ENCODE measurements at regions of chr10 and their contacts with region 1.

Region 1: DNA sequence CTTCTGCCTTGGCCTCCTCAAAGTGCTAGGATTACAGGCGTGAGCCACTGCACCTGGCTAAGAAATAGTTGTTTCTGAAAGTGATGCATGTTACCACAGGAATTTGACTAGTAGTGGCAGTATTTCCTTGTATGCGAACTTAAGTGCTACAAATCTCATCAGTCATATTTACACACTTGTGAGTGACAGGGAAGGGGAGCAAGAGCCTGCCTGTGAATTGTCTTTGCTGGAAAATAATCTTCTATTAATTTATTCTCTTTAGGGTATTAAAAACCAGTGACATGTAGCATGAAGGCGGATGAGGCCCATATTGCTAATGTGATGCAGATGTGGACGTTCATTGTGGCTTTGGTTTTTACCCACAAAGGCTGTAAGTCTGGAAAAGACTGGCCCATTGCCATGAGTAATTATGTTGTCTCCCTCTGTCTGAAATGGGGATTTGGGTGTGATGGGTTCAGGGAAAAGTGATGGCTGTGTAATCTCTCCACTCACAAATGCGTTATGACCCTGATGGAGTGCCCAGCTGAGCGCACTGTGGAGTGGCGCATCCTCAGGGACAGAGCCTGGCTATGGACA is 97.6 kb downstream of the CCNY start:
- DNase-seq: peak; percentile 36
- H3K4me3 Mint-ChIP-seq: no peak overlapping the region
- H3K27ac Mint-ChIP-seq: no peak overlapping the region
- H3K4me1 Mint-ChIP-seq: peaks cover 24% of the 10 kb centered on the region
- H3K27me3 Mint-ChIP-seq: no peaks in the 10 kb centered on the region
- CTCF ChIP-seq: no peak

Region 2: DNA sequence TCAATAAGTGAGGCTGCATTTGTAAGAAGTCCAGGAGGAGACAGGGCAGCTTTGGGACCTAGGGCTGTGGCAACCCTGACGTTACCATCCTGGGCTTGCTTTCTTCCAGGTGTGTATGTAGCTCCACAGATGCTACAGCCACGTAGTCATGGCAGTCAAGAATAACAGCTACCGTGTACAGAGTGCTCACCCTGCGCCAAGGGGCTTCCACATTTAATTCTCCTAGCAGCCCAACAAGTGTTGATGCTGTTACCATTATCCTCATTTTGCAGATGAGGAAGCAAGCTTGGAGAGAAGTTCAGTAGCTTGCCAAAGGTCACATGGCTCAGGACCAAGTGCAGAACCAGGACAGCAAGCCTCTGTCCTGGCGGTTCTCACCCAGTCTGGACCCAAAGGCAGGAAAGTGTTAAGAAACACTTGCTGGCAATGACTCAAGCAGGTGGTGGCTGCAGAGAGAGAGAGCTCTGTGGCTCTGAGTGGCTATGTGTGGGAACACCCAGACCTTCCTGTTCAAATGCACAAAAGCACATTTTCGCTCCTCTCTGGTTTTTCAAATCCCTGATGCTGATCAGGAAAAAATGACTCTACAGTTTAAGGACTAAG is 217.5 kb before region 1 on chr10:
- CTCF ChIA-PET with region 1: no interaction called
- intact Hi-C with region 1: no loop called
- DNase-seq: no peak
- H3K4me3 Mint-ChIP-seq: no peak overlapping the region
- H3K27ac Mint-ChIP-seq: no peak overlapping the region
- H3K4me1 Mint-ChIP-seq: no peaks in the 10 kb centered on the region
- H3K27me3 Mint-ChIP-seq: no peaks in the 10 kb centered on the region
- CTCF ChIP-seq: no peak

Region 3: DNA sequence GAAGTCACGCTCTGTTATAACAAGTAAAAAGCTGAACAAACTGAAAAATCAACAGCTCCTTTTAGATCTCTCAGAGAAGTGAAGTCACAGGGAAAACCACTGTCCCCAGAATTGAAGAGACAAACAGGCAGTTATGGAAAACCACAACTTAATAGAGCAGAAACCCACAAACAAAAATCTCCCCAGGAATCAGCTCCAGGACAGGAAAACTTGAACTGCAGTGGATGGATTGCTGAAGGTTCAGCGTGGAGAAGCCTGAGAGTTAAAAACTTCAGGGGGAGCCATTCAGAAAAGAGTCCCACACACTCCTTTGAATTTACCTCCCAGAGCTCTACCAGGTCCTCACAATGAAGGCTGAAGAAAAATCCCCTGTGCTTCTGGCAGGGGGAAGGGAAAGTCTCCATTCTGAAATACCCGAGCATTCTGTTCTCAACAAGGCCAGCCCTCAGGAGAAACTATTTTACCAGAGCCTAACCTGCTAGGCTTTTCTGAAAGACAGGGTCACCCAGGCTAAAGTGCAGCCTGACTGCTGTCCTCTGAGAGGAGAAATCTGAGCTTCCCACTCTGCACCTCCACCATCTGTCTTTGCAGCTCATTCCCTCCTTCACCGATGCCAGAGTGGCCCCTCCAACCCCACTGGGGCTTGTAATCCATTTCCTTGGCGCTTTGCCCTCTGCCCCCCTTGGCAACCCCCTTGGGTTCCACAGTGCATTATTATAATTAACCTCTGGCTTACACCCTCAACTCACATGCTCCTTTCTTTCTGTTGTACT is 162.7 kb before region 1 on chr10:
- CTCF ChIA-PET with region 1: no interaction called
- intact Hi-C with region 1: no loop called
- DNase-seq: no peak
- H3K4me3 Mint-ChIP-seq: no peak overlapping the region
- H3K27ac Mint-ChIP-seq: no peak overlapping the region
- H3K4me1 Mint-ChIP-seq: peaks cover 9% of the 10 kb centered on the region
- H3K27me3 Mint-ChIP-seq: no peaks in the 10 kb centered on the region
- CTCF ChIP-seq: no peak

Region 4: DNA sequence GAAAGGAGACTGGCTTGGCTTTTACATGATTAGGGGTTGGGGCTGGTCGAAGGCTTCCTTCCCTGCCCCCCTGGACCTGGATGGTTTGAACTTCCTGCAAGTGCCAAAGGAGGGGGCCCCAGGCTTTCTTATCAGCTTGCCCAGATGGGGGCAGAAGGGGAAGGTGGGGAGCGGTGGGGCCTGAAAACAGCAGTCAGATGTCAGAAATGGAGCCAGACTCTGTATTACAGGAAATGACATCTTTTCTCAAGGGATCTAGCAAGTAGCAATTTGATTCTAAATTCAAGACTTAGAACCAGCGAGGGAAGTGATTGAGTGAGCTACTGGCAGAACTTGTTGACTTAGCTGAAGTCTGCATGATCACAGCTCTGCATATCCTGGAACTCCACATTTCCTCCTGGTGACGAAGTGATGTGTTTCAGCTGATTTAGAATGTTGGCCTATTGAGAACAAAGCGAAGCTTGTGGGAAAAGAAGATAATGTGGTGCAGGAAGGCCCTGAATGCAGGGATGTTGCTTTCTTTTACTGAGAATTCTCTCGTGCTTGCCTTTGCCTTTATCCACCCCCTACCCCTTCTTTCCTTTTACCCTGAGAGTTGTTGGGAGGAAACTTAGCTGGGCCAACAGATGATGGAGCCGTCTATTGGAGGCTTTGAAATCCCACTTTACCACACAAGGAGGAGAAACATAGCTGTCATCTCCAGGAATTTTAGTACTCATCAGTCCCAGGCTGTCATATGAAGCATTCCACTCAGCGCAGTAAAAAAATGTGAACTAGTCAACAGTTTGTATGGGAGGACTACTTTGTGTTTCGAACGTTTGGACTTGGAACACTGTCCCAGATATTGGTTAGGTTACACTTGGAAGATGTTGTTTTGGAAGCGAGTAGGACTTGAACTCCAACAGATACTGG is 54.5 kb before region 1 on chr10:
- CTCF ChIA-PET with region 1: no interaction called
- intact Hi-C with region 1: loop called (anchors 5 kb)
- DNase-seq: peak; percentile 10
- H3K4me3 Mint-ChIP-seq: no peak overlapping the region
- H3K27ac Mint-ChIP-seq: no peak overlapping the region
- H3K4me1 Mint-ChIP-seq: peaks cover 32% of the 10 kb centered on the region
- H3K27me3 Mint-ChIP-seq: no peaks in the 10 kb centered on the region
- CTCF ChIP-seq: no peak

Region 5: GRCh38 chr10:35398355-35398754 is 35.6 kb before region 1 on chr10:
- CTCF ChIA-PET with region 1: no interaction called
- intact Hi-C with region 1: no loop called
- DNase-seq: no peak
- H3K4me3 Mint-ChIP-seq: no peak overlapping the region
- H3K27ac Mint-ChIP-seq: no peak overlapping the region
- H3K4me1 Mint-ChIP-seq: peaks cover 10% of the 10 kb centered on the region
- H3K27me3 Mint-ChIP-seq: no peaks in the 10 kb centered on the region
- CTCF ChIP-seq: no peak

Region 6: DNA sequence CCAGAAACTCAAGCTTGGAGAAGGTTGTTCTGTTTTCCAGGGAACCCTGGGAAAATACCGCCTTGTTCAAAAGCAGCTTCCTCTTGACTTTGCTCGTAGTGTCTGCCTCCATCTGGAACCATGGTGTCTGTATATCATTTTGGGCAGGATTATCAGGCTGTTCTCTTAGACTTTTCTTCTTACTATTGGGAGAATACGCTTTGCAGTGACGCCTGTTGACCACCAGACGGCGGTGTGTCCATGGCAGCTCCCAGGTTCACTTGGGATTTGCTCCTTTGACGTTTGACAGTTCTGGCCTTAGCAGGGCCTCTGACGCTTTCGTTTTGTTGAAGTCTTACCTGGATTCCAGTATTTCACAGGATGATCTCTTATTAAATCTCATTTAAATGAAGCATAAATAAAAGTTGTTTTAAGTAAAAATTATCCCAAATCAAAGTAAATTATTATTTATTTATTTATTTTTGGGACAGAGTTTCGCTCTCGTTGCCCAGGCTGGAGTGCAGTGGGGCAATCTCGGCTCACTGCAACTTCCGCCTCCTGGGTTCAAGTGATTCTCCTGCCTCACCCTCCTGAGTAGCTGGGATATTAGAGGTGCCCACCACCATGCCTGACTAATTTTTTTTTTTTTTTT is 129.4 kb after region 1 on chr10:
- CTCF ChIA-PET with region 1: no interaction called
- intact Hi-C with region 1: no loop called
- DNase-seq: peak; percentile 69
- H3K4me3 Mint-ChIP-seq: no peak overlapping the region
- H3K27ac Mint-ChIP-seq: no peak overlapping the region
- H3K4me1 Mint-ChIP-seq: no peaks in the 10 kb centered on the region
- H3K27me3 Mint-ChIP-seq: no peaks in the 10 kb centered on the region
- CTCF ChIP-seq: peak; percentile 94